HEK293T (cell line): ENCODE measurements at regions of chr7 and their contacts with region 1.

Region 1: GRCh38 chr7:135281363-135281949 is 47.8 kb downstream of the STRA8 start:
- DNase-seq: peak; percentile 91

Region 2: DNA sequence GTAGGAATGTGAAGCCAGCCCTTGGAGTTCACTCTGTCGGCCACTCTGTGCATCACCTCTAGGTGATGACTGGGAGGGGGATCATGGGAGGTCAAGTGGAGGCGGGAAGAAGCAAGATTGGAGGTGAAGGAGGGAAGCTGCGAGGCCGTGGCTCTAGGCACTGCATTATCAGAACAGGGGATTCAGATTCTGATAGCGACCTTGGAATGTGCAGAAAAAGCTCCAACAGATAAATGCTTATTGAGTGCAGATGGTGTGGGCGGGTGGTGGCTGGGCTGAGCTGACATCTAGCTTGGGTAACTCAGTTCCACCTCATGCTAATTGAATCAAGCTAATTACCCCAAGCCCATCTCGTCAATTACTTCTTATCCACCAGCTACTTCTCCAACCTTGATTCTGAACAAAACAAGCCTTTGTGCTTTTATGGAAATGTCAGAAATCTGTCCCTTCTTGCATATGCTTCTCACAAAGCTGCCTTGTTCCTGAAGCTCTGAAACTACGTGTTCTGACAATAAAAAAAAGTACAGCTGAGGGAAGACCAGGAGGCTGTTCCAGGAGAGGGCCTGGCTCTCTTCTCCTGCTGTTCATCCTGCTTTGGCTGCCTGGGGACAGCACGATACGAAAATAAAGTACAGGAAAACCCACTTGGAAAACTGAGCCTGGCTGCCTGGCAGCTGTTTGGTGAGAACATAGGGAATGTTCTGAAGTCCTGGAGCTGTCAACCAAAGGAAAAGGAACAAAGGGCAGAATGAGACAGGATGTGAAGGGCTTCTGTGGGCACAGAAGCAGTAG is 20.3 kb before region 1 on chr7:
- CTCF ChIA-PET with region 1: interaction called, 24 read pairs
- POLR2A ChIA-PET with region 1: no interaction called
- DNase-seq: peak; percentile 49

Region 3: GRCh38 chr7:135335628-135336139 is 54.2 kb after region 1 on chr7:
- CTCF ChIA-PET with region 1: interaction called, 56 read pairs
- POLR2A ChIA-PET with region 1: interaction called, 3 read pairs
- DNase-seq: peak; percentile 83

Region 4: GRCh38 chr7:135368416-135369186 is 87.1 kb after region 1 on chr7:
- CTCF ChIA-PET with region 1: no interaction called
- POLR2A ChIA-PET with region 1: no interaction called
- DNase-seq: no peak